CD8-positive, alpha-beta memory T cell (primary cell): ENCODE measurements at regions of chr10 and their contacts with region 1.

Region 1: DNA sequence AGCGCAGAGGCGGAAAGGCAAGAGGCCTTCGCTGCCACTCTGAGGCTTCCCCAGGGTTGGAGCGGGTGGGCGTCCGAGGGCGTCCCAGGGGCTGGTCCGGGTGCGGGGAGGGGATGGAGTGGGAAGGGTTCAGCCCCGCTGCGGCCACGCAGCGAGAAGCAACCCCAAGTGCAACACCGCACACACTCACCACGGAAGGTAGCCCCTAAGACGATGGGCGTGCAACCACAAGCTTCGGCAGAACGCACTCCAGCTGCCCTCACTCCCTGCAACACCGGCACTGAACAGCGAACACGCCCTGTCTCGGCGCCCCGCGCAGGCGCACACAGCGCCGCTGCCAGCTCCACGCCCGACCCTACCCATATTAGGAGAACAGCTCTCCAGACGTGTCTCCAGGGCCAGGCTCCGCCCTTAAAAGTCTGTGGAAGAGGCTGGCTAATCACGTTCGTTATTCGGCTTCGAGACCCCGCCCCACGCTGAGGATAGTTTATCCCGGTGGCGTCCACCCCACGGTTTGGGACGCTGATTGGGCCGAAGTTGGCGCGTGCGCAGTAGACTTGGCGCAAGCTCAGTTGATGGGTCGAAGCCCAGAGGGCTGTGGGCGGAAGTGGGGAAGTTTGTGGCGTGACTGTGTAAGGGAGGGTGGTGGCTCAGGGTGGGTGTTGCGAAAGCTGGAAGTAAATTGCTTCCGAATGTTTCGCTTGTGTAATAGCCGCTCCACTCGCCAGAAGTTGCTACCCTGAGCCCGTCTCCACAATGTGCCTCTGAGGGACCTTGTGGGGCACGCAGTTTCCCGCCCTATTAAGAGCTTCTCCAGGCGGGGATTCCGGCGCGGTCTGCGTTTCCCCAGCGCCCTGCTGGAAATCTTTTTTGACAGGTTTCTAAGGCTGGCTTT is at the start of gene RSU1:
- DNase-seq: peak; percentile 100
- H3K4me3 ChIP-seq: peak within 1 kb of the TSS; percentile 90
- H3K4me3 Mint-ChIP-seq: peak within 1 kb of the TSS; percentile 82 to 97 (median 94)
- H3K27ac ChIP-seq: peak within 1 kb of the TSS; percentile 91
- H3K27ac Mint-ChIP-seq: peak within 1 kb of the TSS; percentile 82 to 97 (median 96)
- H3K4me1 ChIP-seq: peaks cover 29% of the 10 kb centered on the region
- H3K4me1 Mint-ChIP-seq: peaks cover 36 to 55% (median 48%) of the 10 kb centered on the region in 3 donors
- H3K27me3 ChIP-seq: no peaks in the 10 kb centered on the region
- H3K27me3 Mint-ChIP-seq: peaks cover 0 to 10% of the 10 kb centered on the region in 2 donors
- total RNA-seq, gene RSU1: 66.4 to 68.5 TPM

Region 2: GRCh38 chr10:16828114-16828568 is 10.8 kb after region 1 on chr10:
- CTCF ChIA-PET with region 1: interaction called, 19 read pairs
- POLR2A ChIA-PET with region 1: interaction called, 3 read pairs
- DNase-seq: peak; percentile 30 to 70 (median 55)
- H3K4me3 ChIP-seq: no peak overlapping the region
- H3K4me3 Mint-ChIP-seq: no peak overlapping the region
- H3K27ac ChIP-seq: no peak overlapping the region
- H3K27ac Mint-ChIP-seq: peak overlapping the region in 2 of 8 donors; percentile 57 to 81
- H3K4me1 ChIP-seq: no peaks in the 10 kb centered on the region
- H3K4me1 Mint-ChIP-seq: peaks cover 0 to 5% (median 3%) of the 10 kb centered on the region in 3 donors
- H3K27me3 ChIP-seq: no peaks in the 10 kb centered on the region
- H3K27me3 Mint-ChIP-seq: peaks cover 0 to 2% of the 10 kb centered on the region in 2 donors

Region 3: DNA sequence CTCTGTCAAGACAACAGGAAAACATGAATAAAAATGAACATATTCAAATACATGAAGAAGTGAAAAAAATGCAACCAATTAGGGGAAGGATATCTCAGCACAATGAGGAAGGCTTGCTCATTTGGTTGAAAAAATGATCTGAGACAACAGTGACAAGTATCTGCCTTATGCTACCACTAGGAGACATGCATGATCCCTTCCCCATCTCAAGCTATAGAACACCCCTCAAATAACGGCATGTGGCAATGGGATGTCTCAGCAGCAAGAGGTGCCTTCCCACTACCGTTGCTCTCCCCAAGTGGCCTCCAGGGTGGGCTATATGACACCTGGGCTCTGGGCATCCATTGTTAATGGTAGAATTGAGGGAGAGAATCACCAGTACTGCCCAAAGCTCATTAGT is 97.9 kb after region 1 on chr10:
- CTCF ChIA-PET with region 1: no interaction called
- POLR2A ChIA-PET with region 1: no interaction called
- DNase-seq: no peak
- H3K4me3 ChIP-seq: no peak overlapping the region
- H3K4me3 Mint-ChIP-seq: no peak overlapping the region
- H3K27ac ChIP-seq: no peak overlapping the region
- H3K27ac Mint-ChIP-seq: peak overlapping the region in 3 of 8 donors; percentile 0 to 32 (median 21)
- H3K4me1 ChIP-seq: no peaks in the 10 kb centered on the region
- H3K4me1 Mint-ChIP-seq: no peaks in the 10 kb centered on the region
- H3K27me3 ChIP-seq: no peaks in the 10 kb centered on the region
- H3K27me3 Mint-ChIP-seq: no peaks in the 10 kb centered on the region

Region 4: DNA sequence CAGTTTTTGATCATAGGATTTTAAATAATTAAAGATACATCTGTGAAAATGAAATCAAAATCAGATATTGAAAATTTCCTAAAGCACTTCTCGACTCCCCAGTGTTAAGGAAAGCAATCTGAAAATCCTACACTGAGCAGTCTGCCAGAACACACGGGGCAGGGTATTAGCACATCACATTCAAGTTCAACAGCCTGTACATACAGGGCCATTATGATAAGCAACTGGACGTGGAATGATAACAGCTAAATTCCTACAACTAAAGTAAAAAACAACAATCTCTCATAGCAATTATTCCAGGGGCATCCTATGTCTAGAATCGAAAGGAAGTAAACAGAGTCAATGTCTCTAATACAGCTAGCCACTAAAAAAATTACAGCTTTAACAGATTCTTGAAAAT is 352.4 kb after region 1 on chr10:
- CTCF ChIA-PET with region 1: no interaction called
- POLR2A ChIA-PET with region 1: no interaction called
- DNase-seq: no peak
- H3K4me3 ChIP-seq: no peak overlapping the region
- H3K4me3 Mint-ChIP-seq: no peak overlapping the region
- H3K27ac ChIP-seq: no peak overlapping the region
- H3K27ac Mint-ChIP-seq: no peak overlapping the region
- H3K4me1 ChIP-seq: no peaks in the 10 kb centered on the region
- H3K4me1 Mint-ChIP-seq: peaks cover 0 to 1% (median 0%) of the 10 kb centered on the region in 3 donors
- H3K27me3 ChIP-seq: no peaks in the 10 kb centered on the region
- H3K27me3 Mint-ChIP-seq: no peaks in the 10 kb centered on the region